Adrenal gland (tissue), 19 donors: ENCODE measurements at regions of chr20 and their contacts with region 1.

Region 1: DNA sequence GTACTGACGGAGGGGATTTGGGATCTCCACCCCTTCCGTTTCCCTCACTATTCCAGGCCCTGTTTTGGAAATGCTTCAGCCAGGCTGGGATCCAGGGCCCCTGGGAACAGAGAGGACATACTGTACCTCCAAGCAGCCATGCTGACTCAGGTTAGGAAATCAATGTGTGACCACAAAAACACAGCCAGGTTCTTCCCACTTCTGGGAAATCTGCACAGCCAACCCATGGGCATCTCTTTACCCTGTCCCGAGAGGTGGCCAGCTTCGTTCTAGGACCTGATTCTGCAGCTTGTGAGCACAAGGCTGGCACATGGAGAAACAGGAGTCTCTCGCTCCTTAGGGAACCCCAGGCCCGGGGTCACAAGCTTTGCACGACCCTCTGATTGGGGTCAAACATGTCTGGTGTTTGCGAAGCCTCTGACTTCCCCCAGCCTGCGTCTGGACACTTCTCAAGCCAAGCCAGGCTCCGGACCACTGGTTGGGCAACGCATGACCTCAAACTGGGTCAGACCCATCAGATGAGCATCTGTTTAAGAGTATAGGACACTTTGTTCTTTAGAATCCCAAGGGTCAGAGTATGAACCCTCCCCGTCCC is 8.3 kb upstream of the TTPAL start:
- DNase-seq: peak in 3 of 7 donors; percentile 30 to 71 (median 33)
- H3K4me3 ChIP-seq: no peak overlapping the region
- H3K27ac ChIP-seq: peak overlapping the region in 1 of 5 donors; percentile 55
- H3K4me1 ChIP-seq: no peaks in the 10 kb centered on the region
- H3K27me3 ChIP-seq: no peaks in the 10 kb centered on the region
- CTCF ChIP-seq: no peak
- POLR2A ChIP-seq: no peak

Region 2: DNA sequence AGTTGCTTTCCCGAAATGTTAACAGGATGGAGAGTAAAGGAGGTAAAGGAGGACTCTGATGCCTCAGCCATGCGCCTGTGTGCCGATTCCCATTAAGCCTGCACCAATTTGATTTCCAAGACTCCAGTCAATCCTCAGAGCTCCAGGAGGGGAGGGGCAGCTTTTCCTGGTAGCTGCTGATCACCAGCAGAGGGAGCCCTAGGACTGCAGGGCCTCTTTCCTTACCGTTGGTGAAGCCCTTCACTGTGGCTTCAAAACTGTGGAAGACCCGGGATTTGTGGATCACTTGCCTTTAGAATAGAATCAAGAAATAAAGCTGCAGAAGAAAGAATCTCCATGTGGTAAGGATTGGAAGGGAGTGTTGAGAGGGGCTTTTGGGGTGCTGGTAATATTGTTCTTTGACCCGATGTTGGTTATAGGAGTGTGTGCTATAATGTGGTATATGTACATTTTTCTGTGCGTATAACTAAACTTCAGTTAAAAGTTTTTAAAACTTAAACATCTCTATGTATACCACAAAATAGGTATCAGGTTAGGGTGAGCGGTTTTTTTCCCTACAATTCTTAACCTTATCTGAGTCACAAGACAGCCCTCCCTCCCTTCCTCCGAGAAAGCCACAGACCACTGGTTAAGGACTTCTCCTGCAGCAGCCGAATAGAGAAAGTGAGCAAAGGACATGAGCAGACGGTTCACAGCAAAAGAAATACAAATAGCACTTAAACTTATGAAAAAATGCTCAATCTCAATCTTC is 249.9 kb before region 1 on chr20:
- intact Hi-C with region 1: loop called in 1 of 2 experiments (anchors 5 kb)
- DNase-seq: peak; percentile 65 to 88 (median 79)
- H3K4me3 ChIP-seq: no peak overlapping the region
- H3K27ac ChIP-seq: no peak overlapping the region
- H3K4me1 ChIP-seq: no peaks in the 10 kb centered on the region
- H3K27me3 ChIP-seq: no peaks in the 10 kb centered on the region
- CTCF ChIP-seq: peak; percentile 80 to 91 (median 88)
- POLR2A ChIP-seq: no peak

Region 3: DNA sequence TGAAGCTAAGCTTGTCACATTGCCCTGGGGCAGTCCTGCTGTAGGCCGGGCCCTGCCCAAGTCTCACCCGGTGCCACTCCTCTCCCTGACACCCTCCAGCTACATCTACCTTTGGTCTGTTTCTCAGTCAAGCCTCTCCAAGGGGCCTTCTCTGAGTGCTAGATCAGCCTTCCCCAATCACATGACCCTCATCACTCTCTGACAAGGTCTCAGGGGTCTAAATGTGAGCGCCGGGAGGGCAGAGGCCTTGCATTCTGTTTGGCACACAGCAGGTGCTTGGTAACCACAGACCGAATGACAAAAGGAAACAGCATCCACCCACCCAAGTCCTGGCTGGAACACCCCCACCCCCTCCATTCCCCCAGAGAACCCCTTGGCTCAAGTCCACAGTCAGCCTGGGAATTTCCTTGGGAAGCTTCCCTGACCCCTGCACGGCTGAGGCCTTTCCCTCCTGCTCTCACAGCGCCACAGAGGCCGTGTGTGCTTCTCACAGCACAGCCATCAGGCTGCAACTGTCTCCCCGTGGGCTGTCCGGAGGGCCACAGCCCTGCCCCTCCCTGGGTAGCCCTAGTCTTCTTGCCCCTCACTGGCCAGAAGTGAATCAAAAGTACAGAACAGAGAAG is 147.9 kb after region 1 on chr20:
- intact Hi-C with region 1: loop called in 1 of 2 experiments (anchors 5 kb)
- DNase-seq: no peak
- H3K4me3 ChIP-seq: no peak overlapping the region
- H3K27ac ChIP-seq: peak overlapping the region in 3 of 5 donors; percentile 18 to 57 (median 38)
- H3K4me1 ChIP-seq: peaks cover 0 to 33% of the 10 kb centered on the region in 2 donors
- H3K27me3 ChIP-seq: no peaks in the 10 kb centered on the region
- CTCF ChIP-seq: no peak
- POLR2A ChIP-seq: no peak